AG04450 (cell line): ENCODE measurements at regions of chr11 and their contacts with region 1.

Region 1: GRCh38 chr11:73661035-73661628 is 14.8 kb downstream of the PLEKHB1 start:
- DNase-seq: peak; percentile 49
- H3K4me3 ChIP-seq: peak overlapping the region; percentile 55
- H3K27ac ChIP-seq: peak overlapping the region; percentile 11
- H3K27me3 ChIP-seq: no peaks in the 10 kb centered on the region
- CTCF ChIP-seq: peak; percentile 98

Region 2: GRCh38 chr11:73376160-73376802 is 284.9 kb before region 1 on chr11 and contains the start of gene RELT:
- CTCF ChIA-PET with region 1: interaction called, 10 read pairs
- POLR2A ChIA-PET with region 1: no interaction called
- DNase-seq: peak; percentile 69
- H3K4me3 ChIP-seq: peak within 1 kb of the TSS; percentile 76
- H3K27ac ChIP-seq: no peak within 1 kb of the TSS
- H3K27me3 ChIP-seq: no peaks in the 10 kb centered on the region
- CTCF ChIP-seq: peak; percentile 74
- polyA plus RNA-seq, gene RELT: 1.1 TPM in 2 replicates

Region 3: DNA sequence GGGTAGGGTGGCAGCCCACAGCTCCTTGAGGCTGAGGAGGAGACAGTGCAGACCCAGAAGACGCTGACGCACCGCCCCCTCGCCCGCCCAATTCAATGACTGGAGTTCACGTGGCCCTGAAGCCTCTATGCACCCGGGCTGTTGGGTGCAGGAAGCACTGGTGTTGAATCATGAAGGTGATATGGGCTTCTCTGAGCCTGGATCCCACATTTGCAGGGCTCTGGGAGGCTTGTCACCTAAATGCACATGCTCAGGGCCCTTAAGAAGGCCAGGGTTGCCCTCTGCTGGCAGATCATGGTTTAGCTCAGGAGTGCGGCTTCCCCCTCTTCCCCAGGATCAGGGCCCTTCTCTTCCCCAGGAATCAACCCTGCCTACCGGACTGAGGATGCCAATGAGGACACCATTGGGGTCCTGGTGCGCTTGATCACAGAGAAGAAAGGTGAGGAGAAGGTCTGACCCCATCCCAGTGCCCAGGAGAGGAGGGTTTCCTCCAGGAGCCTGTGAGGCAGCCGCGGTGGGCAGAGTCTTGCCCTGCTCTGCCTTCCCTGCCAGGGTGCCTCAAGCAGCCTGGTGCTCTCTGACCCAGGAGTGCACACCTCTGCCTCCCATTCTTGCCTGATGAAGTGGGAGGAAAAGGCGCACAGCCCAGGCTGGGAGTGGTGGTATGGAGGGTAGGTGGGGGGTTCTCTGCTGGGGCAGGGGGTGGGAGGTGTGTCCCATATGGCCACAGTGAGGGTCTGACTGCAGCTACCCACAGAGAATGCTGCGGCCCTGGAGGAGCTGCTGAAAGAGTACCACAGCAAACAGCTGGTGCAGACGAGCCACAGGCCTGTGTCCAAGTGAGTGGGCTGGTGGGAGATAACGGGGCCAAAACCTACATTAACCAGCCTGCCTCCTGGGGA is 267.4 kb before region 1 on chr11:
- CTCF ChIA-PET with region 1: interaction called, 13 read pairs
- POLR2A ChIA-PET with region 1: no interaction called
- DNase-seq: peak; percentile 59
- H3K4me3 ChIP-seq: no peak overlapping the region
- H3K27ac ChIP-seq: peak overlapping the region; percentile 39
- H3K27me3 ChIP-seq: no peaks in the 10 kb centered on the region
- CTCF ChIP-seq: peak; percentile 91

Region 4: DNA sequence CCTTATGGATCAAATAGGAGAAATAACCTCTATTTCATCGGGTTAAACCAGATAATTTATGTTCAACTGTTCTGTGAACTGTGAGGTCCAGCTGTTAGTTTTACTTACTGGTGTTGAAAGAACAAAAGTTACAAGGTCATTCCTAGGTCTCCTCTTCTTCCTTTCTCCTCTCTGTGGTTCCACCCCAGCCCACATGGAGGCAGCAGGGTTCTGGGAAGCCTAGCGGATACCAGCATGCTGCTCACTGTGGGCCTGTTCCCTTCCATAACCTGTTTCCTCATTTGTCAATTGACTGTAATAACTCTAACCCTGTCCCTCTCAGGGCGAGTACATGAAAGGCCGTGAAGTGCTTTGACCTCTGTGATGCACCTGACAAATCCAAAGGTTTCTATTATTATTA is 257.1 kb before region 1 on chr11:
- CTCF ChIA-PET with region 1: interaction called, 66 read pairs
- POLR2A ChIA-PET with region 1: no interaction called
- DNase-seq: no peak
- H3K4me3 ChIP-seq: no peak overlapping the region
- H3K27ac ChIP-seq: no peak overlapping the region
- H3K27me3 ChIP-seq: no peaks in the 10 kb centered on the region
- CTCF ChIP-seq: peak; percentile 73

Region 5: GRCh38 chr11:73647459-73648100 is 13.6 kb before region 1 on chr11:
- CTCF ChIA-PET with region 1: interaction called, 18 read pairs
- POLR2A ChIA-PET with region 1: no interaction called
- DNase-seq: peak; percentile 30
- H3K4me3 ChIP-seq: peak overlapping the region; percentile 46
- H3K27ac ChIP-seq: no peak overlapping the region
- H3K27me3 ChIP-seq: peaks cover 14% of the 10 kb centered on the region
- CTCF ChIP-seq: no peak

Region 6: GRCh38 chr11:73705053-73705452 is 43.9 kb after region 1 on chr11:
- CTCF ChIA-PET with region 1: no interaction called
- POLR2A ChIA-PET with region 1: no interaction called
- DNase-seq: no peak
- H3K4me3 ChIP-seq: no peak overlapping the region
- H3K27ac ChIP-seq: no peak overlapping the region
- H3K27me3 ChIP-seq: no peaks in the 10 kb centered on the region
- CTCF ChIP-seq: no peak